Activated CD8-positive, alpha-beta T cell treated with anti-CD3 and anti-CD28 coated beads for 36 hours (primary cell): ENCODE measurements at regions of chr11 and their contacts with region 1.

Region 1: GRCh38 chr11:42390116-42390515 is 921.7 kb upstream of the API5 start:
- DNase-seq: no peak
- ATAC-seq: no peak
- H3K4me3 Mint-ChIP-seq: no peak overlapping the region
- H3K27ac Mint-ChIP-seq: no peak overlapping the region
- H3K4me1 Mint-ChIP-seq: no peaks in the 10 kb centered on the region
- H3K27me3 Mint-ChIP-seq: no peaks in the 10 kb centered on the region
- CTCF ChIP-seq: no peak

Region 2: DNA sequence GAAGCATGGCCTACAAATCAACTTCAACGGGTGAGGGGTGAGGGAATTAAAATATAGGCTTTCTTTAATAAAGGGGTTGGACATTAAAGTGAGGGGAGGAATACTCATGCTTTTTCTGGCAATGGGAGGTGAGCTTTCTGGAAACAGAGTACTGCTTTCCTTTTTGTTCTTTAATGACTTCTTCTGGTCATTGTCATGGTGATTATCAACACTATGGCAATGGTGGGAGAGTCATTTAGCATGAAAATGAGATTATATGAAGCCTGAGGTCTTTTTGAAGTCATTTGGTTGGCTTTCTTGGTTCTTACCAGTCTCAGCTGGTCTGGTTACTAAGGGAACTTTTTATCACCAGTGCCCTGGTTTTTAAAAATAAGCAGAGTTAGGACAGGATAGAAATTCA is 454.9 kb before region 1 on chr11:
- CTCF ChIA-PET with region 1: no interaction called
- POLR2A ChIA-PET with region 1: no interaction called
- intact Hi-C with region 1: no loop called
- DNase-seq: no peak
- ATAC-seq: no peak
- H3K4me3 Mint-ChIP-seq: no peak overlapping the region
- H3K27ac Mint-ChIP-seq: no peak overlapping the region
- H3K4me1 Mint-ChIP-seq: no peaks in the 10 kb centered on the region
- H3K27me3 Mint-ChIP-seq: no peaks in the 10 kb centered on the region
- CTCF ChIP-seq: no peak

Region 3: GRCh38 chr11:42444406-42444805 is 54.3 kb after region 1 on chr11:
- CTCF ChIA-PET with region 1: no interaction called
- POLR2A ChIA-PET with region 1: no interaction called
- intact Hi-C with region 1: loop called (anchors 10 kb)
- DNase-seq: no peak
- ATAC-seq: no peak
- H3K4me3 Mint-ChIP-seq: no peak overlapping the region
- H3K27ac Mint-ChIP-seq: no peak overlapping the region
- H3K4me1 Mint-ChIP-seq: no peaks in the 10 kb centered on the region
- H3K27me3 Mint-ChIP-seq: no peaks in the 10 kb centered on the region
- CTCF ChIP-seq: no peak